ENCODE measurements at regions of chr11 and their contacts with region 1.

Region 1: DNA sequence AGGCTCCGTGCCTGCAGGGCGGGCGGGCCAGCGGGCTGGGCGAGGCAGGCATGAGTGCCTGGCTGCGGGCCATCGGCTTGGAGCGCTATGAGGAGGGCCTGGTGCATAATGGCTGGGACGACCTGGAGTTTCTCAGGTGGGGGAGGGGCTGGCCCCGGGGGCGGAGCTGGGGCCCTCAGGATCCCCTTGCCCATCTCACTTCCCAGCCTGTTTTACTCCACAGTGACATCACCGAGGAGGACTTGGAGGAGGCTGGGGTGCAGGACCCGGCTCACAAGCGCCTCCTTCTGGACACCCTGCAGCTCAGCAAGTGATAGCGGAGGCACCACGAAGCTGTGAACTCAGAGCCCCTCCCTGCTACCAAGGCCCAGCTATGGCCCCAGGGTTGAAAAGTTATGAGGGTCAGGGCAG is 5.9 kb downstream of the PHOX2A start:
- DNase-seq: peak; percentile 87
- H3K4me3 ChIP-seq: peak overlapping the region; percentile 30 to 83; a peak in 2 of 4 replicates
- H3K27ac ChIP-seq: peak overlapping the region; percentile 64 to 90
- H3K4me1 ChIP-seq: peaks cover 17 to 27% of the 10 kb centered on the region in 2 experiments; a peak in 2 of 4 replicates
- H3K27me3 ChIP-seq: no peaks in the 10 kb centered on the region
- CTCF ChIP-seq: peak; percentile 91
- EP300 ChIP-seq: no peak
- RAD21 ChIP-seq: peak; percentile 56

Region 2: DNA sequence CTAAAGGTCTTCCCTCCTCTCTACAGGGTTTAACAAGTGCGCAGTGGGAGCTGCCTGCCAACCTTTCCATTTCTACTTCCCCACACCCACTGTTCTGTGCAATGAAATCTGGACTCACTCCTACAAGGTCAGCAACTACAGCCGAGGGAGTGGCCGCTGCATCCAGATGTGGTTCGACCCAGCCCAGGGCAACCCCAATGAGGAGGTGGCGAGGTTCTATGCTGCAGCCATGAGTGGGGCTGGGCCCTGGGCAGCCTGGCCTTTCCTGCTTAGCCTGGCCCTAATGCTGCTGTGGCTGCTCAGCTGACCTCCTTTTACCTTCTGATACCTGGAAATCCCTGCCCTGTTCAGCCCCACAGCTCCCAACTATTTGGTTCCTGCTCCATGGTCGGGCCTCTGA is 42.2 kb before region 1 on chr11:
- CTCF ChIA-PET with region 1: no interaction called
- POLR2A ChIA-PET with region 1: no interaction called
- DNase-seq: no peak
- H3K4me3 ChIP-seq: no peak overlapping the region
- H3K27ac ChIP-seq: no peak overlapping the region
- H3K4me1 ChIP-seq: no peaks in the 10 kb centered on the region
- H3K27me3 ChIP-seq: no peaks in the 10 kb centered on the region
- CTCF ChIP-seq: no peak
- EP300 ChIP-seq: no peak
- RAD21 ChIP-seq: no peak

Region 3: DNA sequence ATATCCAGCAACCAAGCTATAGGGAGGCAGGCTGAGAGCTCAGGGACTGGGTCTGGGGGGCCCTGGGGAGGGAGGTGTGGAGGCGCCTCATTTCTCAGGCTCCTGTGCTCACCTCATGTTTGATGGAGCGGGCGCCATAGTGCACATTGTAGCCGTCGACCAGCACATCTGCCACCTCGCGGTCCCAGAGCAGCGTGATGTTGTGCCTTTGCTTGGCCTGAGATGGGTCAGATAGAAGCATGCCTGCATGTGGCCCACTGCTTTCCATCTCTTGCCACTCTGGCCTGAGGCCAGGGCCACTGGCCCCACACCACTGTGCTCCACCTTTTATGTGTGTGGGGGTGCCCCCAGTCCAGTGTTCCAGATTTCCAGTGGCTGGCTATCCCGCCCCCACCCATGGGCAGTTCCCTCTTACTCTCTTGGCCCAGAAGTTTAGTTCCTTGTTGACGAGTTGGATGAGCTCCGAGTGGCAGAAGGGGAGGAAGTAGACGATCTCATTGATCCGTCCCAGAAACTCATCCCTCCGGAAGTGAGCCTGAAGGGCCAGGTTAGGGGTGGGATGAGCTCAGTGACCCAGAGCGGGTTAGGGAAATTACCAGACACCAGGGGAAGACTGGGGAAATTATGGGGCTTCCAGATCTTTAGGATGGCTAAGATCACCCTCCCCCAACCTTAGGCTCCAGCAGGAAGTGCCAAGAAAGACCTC is 56.0 kb after region 1 on chr11:
- CTCF ChIA-PET with region 1: interaction called, 5 read pairs
- POLR2A ChIA-PET with region 1: interaction called, 15 read pairs
- DNase-seq: no peak
- H3K4me3 ChIP-seq: no peak overlapping the region
- H3K27ac ChIP-seq: no peak overlapping the region; a peak in 1 of 4 replicates
- H3K4me1 ChIP-seq: peaks cover 0 to 13% of the 10 kb centered on the region in 2 experiments; a peak in 1 of 4 replicates
- H3K27me3 ChIP-seq: no peaks in the 10 kb centered on the region
- CTCF ChIP-seq: no peak
- EP300 ChIP-seq: no peak
- RAD21 ChIP-seq: no peak

Region 4: GRCh38 chr11:72328366-72329224 is 90.5 kb after region 1 on chr11:
- CTCF ChIA-PET with region 1: interaction called, 23 read pairs
- POLR2A ChIA-PET with region 1: interaction called, 81 read pairs
- DNase-seq: no peak
- H3K4me3 ChIP-seq: no peak overlapping the region
- H3K27ac ChIP-seq: peak overlapping the region; percentile 87 to 100
- H3K4me1 ChIP-seq: peaks cover 62 to 71% of the 10 kb centered on the region in 2 experiments
- H3K27me3 ChIP-seq: no peaks in the 10 kb centered on the region
- CTCF ChIP-seq: peak; percentile 51
- EP300 ChIP-seq: peak; percentile 42 to 61; a peak in 3 of 4 replicates
- RAD21 ChIP-seq: peak; percentile 24; the same call in 1 of the 2 replicates

Region 5: GRCh38 chr11:72338741-72339140 is 100.7 kb after region 1 on chr11:
- CTCF ChIA-PET with region 1: interaction called, 23 read pairs
- POLR2A ChIA-PET with region 1: interaction called, 66 read pairs
- DNase-seq: no peak
- H3K4me3 ChIP-seq: no peak overlapping the region
- H3K27ac ChIP-seq: peak overlapping the region; percentile 15 to 99; a peak in 3 of 4 replicates
- H3K4me1 ChIP-seq: peaks cover 18 to 84% of the 10 kb centered on the region in 2 experiments; a peak in 3 of 4 replicates
- H3K27me3 ChIP-seq: no peaks in the 10 kb centered on the region
- CTCF ChIP-seq: no peak
- EP300 ChIP-seq: peak in 1 of 2 experiments; percentile 66; a peak in 1 of 4 replicates
- RAD21 ChIP-seq: no peak

Region 6: DNA sequence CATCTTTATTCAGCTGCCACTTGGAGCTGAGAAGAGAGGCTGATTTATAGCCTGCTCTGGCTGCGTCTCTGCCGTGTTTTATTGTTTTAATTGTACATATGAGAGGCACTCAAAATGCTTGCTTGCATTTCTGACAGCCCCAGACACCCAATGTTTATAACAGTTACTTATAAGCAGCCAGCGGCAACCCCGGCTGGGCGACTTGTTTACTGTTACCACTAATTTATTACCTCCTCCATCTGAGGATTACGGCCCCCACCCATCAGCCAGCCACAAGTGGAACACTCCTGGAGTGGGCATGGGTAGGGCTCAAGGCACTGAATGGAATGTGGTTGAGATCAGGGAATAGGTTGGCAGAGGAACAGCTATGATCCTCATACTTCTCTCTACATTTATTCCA is 135.1 kb after region 1 on chr11:
- CTCF ChIA-PET with region 1: interaction called, 7 read pairs
- POLR2A ChIA-PET with region 1: interaction called, 12 read pairs
- DNase-seq: no peak
- H3K4me3 ChIP-seq: no peak overlapping the region
- H3K27ac ChIP-seq: peak overlapping the region in 1 of 2 experiments; percentile 99; a peak in 2 of 4 replicates
- H3K4me1 ChIP-seq: peaks cover 20 to 44% of the 10 kb centered on the region in 2 experiments
- H3K27me3 ChIP-seq: no peaks in the 10 kb centered on the region
- CTCF ChIP-seq: no peak
- EP300 ChIP-seq: 0 out of 4 replicates have a peak, but pooled peaks of 1 of the 2 experiments have one; percentile 13
- RAD21 ChIP-seq: no peak

Measured in SK-N-SH (cell line).